ENCODE measurements at regions of chr2 and their contacts with region 1.

Region 1: DNA sequence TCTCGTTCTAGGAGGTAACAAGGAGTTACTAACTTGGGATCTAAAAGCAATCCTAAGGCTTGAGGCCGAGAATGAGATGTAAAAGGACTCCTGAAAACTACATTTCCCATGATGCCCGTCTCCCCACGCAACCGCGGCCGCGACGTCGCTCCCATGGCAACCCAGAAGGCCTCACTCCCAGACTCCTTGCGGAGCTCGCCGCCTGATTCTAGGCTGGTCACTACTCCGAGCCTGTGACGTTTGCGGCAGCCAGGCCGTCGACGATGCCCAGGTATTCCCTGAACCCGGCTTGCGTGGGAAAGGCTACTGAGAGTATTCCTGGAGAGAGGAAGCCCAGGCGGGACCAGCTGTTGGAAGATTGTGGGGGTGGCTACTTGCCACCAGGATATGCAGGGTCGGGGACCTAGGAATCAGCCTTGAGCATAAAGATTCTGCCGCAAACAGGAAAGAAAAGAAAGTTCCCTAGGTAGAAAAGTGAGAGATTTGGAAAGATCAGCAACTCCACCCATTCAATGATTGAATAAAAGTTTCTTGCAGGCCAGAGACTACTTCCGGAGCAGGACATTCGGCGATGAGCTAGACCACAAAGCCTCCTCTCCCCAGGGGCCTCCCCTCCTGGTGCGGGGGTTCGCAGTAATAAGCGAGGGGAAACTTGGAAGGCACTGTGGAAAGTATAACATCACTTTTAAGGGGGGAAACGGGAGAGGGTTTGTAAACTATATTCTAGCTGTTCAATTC is at the start of gene DYNC2LI1:
- DNase-seq: peak; percentile 92
- ATAC-seq: peak; percentile 94
- H3K4me3 Mint-ChIP-seq: peak within 1 kb of the TSS; percentile 95
- H3K27ac Mint-ChIP-seq: peak within 1 kb of the TSS; percentile 74
- H3K4me1 Mint-ChIP-seq: peaks cover 29% of the 10 kb centered on the region
- H3K27me3 Mint-ChIP-seq: no peaks in the 10 kb centered on the region
- total RNA-seq, gene DYNC2LI1: 19.5 to 28.4 TPM

Region 2: DNA sequence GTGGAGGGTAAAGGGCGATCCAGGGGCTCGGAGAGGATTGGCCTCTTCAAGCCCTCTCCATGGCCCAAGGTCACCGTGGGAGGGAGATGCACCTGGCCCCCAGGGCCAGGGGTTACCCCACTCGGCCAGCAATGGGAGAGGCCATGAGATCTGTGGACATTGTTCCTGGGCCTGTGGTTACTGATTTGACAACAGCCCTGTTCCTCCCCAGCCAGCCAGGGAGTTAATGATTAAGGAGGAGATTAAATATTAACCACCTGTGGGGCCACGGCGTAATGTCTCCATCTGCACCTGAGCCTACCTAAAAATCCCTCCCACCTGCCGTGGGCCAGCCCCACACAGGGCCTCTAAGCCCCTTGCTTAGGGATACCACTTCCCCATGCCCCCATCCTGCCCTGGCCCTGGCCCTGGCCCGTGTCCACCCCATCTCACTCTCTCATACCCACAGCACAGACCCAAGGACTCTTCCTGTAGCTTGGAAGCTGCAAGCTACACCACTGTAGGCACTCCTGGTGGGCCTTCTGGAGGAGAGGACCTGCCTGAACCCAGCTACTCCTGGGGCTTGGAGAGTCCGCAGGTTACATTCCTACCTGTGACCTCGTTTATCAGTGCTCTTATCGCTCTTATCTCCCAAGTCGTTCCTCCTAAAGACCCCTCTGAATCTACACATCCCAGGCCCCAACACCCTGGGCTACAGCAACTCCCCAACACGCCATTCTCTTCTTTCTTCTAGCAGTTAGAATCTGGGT is 579.8 kb before region 1 on chr2:
- CTCF ChIA-PET with region 1: no interaction called
- POLR2A ChIA-PET with region 1: no interaction called
- intact Hi-C with region 1: no loop called
- DNase-seq: no peak
- ATAC-seq: no peak
- H3K4me3 Mint-ChIP-seq: peak overlapping the region; percentile 75
- H3K27ac Mint-ChIP-seq: peak overlapping the region; percentile 95
- H3K4me1 Mint-ChIP-seq: peaks cover 57% of the 10 kb centered on the region
- H3K27me3 Mint-ChIP-seq: no peaks in the 10 kb centered on the region

Region 3: DNA sequence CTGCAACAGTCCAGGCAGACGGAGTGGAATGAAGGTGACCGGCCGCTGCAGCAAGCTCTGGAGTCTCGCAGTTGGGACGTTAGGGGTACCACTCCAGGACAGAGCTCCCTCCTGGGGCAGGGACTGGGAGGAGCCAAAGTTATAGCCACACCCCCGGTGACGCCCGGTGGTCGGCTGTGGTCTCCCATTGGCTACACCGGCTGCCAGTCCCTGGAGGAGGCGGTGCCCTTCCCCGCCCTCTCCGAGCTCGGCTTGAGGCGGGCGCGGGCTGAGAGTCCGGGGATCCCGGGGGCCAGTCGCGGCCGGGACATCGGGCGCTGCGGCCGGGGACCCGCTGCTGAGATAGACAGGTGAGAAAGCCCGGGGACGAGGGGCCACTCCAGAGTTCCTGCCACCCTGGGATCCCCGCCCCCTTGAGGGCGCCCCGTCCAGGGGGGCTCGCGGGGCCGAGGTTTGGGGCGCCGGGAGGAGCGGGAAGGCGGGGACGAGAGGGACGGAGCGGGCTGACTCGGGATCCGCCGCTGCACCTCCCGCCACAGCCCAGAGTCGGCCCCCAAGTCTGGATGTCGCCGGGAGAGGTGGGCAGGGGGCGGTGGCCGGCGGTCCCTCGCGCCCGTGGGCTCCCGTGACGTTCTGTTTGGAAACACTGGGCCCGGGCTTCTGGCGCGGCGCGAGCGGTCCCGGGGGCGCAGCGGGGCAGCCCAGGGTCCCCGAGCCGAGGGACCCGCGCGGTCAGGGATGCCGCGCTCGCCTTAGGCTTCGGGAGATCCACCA is 136.8 kb before region 1 on chr2 and contains the start of gene PLEKHH2:
- CTCF ChIA-PET with region 1: no interaction called
- POLR2A ChIA-PET with region 1: no interaction called
- intact Hi-C with region 1: loop called (anchors 1 to 10 kb)
- DNase-seq: peak; percentile 94
- ATAC-seq: peak; percentile 100
- H3K4me3 Mint-ChIP-seq: peak within 1 kb of the TSS; percentile 80
- H3K27ac Mint-ChIP-seq: peak within 1 kb of the TSS; percentile 32
- H3K4me1 Mint-ChIP-seq: peaks cover 14% of the 10 kb centered on the region
- H3K27me3 Mint-ChIP-seq: peaks cover 31% of the 10 kb centered on the region
- total RNA-seq, gene PLEKHH2: 1.5 to 2.2 TPM

Region 4: DNA sequence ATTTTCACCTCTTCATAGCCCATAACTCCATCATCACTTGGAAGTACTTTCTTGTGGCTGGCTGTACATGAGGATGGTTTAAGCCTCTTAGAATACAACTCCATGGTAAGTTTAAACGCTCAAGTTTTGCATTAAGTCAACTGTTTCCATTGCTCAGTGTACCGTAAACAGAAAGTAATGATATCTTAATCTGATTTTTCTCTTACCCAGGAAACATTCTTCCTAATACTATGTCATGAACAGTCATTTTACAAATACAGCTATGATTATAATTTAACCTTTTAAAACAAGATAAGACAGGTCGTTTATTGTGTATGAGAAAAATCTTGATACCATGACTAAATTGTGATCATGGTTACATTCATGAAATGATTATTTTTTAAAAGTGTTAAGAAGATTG is 11.8 kb before region 1 on chr2:
- CTCF ChIA-PET with region 1: interaction called, 4 read pairs
- POLR2A ChIA-PET with region 1: no interaction called
- intact Hi-C with region 1: loop called in 1 of 2 experiments (anchors 2 kb)
- DNase-seq: no peak
- ATAC-seq: peak; percentile 76
- H3K4me3 Mint-ChIP-seq: no peak overlapping the region
- H3K27ac Mint-ChIP-seq: no peak overlapping the region
- H3K4me1 Mint-ChIP-seq: peaks cover 15% of the 10 kb centered on the region
- H3K27me3 Mint-ChIP-seq: no peaks in the 10 kb centered on the region

Region 5: GRCh38 chr2:43787895-43788294 is 13.8 kb after region 1 on chr2:
- CTCF ChIA-PET with region 1: interaction called, 5 read pairs
- POLR2A ChIA-PET with region 1: no interaction called
- intact Hi-C with region 1: loop called (anchors 1 kb)
- DNase-seq: no peak
- ATAC-seq: peak; percentile 79
- H3K4me3 Mint-ChIP-seq: no peak overlapping the region
- H3K27ac Mint-ChIP-seq: peak overlapping the region; percentile 70
- H3K4me1 Mint-ChIP-seq: peaks cover 25% of the 10 kb centered on the region
- H3K27me3 Mint-ChIP-seq: no peaks in the 10 kb centered on the region

Region 6: GRCh38 chr2:43995733-43996533 is 221.9 kb after region 1 on chr2 and contains the start of gene LRPPRC:
- CTCF ChIA-PET with region 1: no interaction called
- POLR2A ChIA-PET with region 1: no interaction called
- intact Hi-C with region 1: loop called in 1 of 2 experiments (anchors 2 kb)
- DNase-seq: peak; percentile 95
- ATAC-seq: peak; percentile 97
- H3K4me3 Mint-ChIP-seq: peak within 1 kb of the TSS; percentile 81
- H3K27ac Mint-ChIP-seq: peak within 1 kb of the TSS; percentile 92
- H3K4me1 Mint-ChIP-seq: peaks cover 36% of the 10 kb centered on the region
- H3K27me3 Mint-ChIP-seq: no peaks in the 10 kb centered on the region
- total RNA-seq, gene LRPPRC: 189 to 191 TPM

Region 7: DNA sequence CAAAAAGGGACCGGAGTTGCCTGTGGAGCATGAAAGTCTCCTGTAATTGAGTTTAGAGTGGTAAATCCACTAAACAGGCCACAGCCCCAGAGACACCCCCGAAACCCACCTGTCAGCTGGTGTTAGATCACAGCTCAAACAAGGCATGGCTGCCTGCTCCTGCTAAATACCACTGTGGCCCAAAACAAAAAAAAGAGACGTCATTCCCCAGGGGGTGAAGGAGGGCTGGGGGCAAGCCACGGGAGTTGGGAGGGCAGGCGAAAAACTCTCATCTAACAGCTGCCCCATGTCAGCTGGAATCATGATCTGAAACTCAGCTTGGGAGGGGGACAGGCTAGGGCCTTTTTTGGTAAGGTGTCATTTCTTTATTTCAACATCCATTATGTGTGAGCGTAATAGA is 264.2 kb after region 1 on chr2:
- CTCF ChIA-PET with region 1: no interaction called
- POLR2A ChIA-PET with region 1: no interaction called
- intact Hi-C with region 1: no loop called
- DNase-seq: no peak
- ATAC-seq: no peak
- H3K4me3 Mint-ChIP-seq: no peak overlapping the region
- H3K27ac Mint-ChIP-seq: no peak overlapping the region
- H3K4me1 Mint-ChIP-seq: no peaks in the 10 kb centered on the region
- H3K27me3 Mint-ChIP-seq: peaks cover 2% of the 10 kb centered on the region

Region 8: DNA sequence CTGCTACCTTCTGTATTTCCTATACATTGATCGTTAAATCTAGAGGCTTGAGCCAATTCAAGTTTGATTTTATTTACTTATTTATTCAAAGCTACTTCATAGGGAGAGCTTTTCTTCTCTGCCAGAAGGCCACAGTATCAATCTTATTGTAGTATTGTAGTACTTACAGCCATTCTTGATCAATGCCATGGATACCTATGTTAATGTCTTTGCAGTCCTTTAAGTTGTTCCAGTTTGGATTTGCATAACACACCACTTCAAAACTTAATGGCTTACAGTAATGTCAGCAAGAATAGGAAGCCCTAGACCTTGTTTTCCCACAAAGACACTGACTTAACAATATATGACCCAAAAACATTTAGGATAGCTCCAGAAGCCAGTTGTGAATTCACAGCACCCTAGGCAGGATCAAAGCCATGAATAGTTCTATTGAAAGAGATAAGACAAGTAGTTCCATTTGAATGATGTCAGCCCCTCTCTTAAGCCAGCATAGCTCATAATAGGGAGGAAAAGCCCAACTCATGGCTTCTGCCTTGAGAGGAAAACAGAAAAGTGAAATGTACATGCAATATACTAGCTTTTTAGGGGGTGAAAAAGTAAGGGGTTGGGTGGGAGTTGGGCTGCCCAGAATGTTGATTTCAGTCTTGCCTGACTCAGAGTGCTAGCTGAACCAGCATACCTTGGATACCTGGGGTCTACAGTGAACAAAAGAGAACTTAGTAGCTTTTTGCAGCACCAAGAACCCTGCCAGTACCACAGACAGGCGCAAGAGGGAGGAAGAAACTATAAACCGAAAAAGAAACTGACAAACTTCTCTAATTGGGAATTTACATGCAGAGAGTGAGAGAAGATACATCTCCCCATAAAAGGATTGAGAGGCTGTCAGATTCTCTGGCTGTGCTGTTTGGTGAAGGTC is 689.1 kb after region 1 on chr2:
- CTCF ChIA-PET with region 1: no interaction called
- POLR2A ChIA-PET with region 1: no interaction called
- intact Hi-C with region 1: no loop called
- DNase-seq: no peak
- ATAC-seq: no peak
- H3K4me3 Mint-ChIP-seq: no peak overlapping the region
- H3K27ac Mint-ChIP-seq: no peak overlapping the region
- H3K4me1 Mint-ChIP-seq: no peaks in the 10 kb centered on the region
- H3K27me3 Mint-ChIP-seq: no peaks in the 10 kb centered on the region